Naive thymus-derived CD4-positive, alpha-beta T cell (primary cell): ENCODE measurements at regions of chr1 and their contacts with region 1.

Region 1: DNA sequence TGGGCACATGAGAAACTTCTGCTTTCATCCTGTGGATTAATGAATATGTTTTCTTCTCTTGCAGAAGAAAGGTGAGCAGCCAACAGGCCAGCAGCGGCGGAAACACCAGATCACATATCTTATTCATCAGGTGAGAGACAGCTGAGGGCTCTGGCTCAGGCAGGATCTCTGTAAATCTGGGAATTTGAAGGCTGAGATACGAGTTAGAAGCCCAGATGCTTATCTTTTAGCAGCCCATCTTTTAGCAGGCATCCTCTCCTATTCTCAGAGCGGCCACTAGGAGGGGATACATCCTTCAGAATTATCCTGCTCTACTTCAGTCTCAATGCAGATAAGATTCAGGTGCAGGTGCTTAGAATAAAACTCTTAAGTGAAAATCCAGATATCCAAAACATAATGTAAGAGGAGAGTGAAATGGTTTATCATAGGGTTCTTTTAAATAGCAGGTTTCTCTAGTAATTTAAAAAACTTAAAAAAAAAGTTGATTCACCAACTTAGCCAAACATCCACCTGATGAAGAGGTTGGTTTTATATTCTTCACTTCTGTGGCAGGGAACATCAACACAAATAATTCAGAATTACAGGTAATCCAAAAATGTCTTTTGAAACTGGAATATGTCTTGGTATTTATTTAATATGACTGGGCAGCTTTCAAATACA is 19.3 kb downstream of the SH2D2A start:
- DNase-seq: peak in 8 of 9 donors; percentile 47 to 76 (median 66)
- ATAC-seq: peak; percentile 89
- H3K4me3 ChIP-seq: no peak overlapping the region
- H3K4me3 Mint-ChIP-seq: no peak overlapping the region
- H3K27ac ChIP-seq: no peak overlapping the region
- H3K27ac Mint-ChIP-seq: peak overlapping the region in 5 of 9 donors; percentile 0 to 49 (median 18)
- H3K4me1 ChIP-seq: no peaks in the 10 kb centered on the region
- H3K4me1 Mint-ChIP-seq: peaks cover 0 to 24% (median 8%) of the 10 kb centered on the region in 7 donors
- H3K27me3 ChIP-seq: no peaks in the 10 kb centered on the region
- H3K27me3 Mint-ChIP-seq: no peaks in the 10 kb centered on the region

Region 2: DNA sequence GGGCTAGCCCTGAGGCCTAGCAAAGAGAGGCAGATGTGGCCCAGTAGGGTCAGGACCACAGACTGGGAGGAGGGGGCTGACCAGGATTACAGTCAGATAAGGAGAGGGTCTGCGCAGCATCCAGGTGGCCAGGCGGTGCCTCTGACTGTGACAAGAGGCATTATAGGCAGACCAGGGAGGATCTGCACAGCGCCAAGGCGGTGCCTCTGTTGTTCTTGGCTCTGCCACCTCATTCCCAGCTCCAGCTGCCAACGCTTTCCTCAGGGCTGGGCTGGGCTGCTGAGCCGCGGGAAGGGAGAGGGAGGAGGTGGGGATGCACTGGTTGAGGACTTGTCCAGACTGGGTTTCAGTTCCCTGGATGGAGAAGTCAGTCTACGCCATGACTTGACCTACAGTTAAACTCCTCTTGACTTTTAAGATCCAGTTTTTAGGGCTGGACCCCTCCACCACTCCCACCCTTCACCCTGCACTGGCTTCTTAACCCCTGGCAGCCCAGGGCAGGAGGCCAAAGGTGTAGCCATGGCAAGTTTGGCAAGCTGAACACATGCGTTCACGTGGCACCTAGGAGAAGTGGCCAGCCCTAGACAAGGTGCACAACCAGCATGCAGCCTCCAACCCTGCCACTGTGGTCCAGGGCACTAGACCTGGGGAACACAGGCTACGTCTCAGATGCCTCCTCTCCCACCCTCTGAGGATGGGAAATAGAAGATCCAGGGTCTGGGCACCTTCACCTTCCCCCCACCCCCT is 87.4 kb before region 1 on chr1:
- CTCF ChIA-PET with region 1: no interaction called
- POLR2A ChIA-PET with region 1: no interaction called
- intact Hi-C with region 1: no loop called
- DNase-seq: no peak
- ATAC-seq: no peak
- H3K4me3 ChIP-seq: no peak overlapping the region
- H3K4me3 Mint-ChIP-seq: no peak overlapping the region
- H3K27ac ChIP-seq: no peak overlapping the region
- H3K27ac Mint-ChIP-seq: peak overlapping the region in 2 of 9 donors; percentile 1 to 65
- H3K4me1 ChIP-seq: peaks cover 16 to 23% of the 10 kb centered on the region in 2 donors
- H3K4me1 Mint-ChIP-seq: peaks cover 11 to 29% (median 21%) of the 10 kb centered on the region in 7 donors
- H3K27me3 ChIP-seq: no peaks in the 10 kb centered on the region
- H3K27me3 Mint-ChIP-seq: peaks cover 0 to 22% (median 0%) of the 10 kb centered on the region in 5 donors

Region 3: GRCh38 chr1:156838981-156839410 is 41.7 kb after region 1 on chr1:
- CTCF ChIA-PET with region 1: interaction called, 10 read pairs
- POLR2A ChIA-PET with region 1: no interaction called
- intact Hi-C with region 1: loop called in 1 of 2 experiments (anchors 1 kb)
- DNase-seq: peak in 8 of 9 donors; percentile 30 to 74 (median 50)
- ATAC-seq: peak; percentile 75
- H3K4me3 ChIP-seq: no peak overlapping the region
- H3K4me3 Mint-ChIP-seq: peak overlapping the region in 1 of 10 donors; percentile 34
- H3K27ac ChIP-seq: no peak overlapping the region
- H3K27ac Mint-ChIP-seq: peak overlapping the region in 3 of 9 donors; percentile 47 to 81 (median 48)
- H3K4me1 ChIP-seq: peaks cover 0 to 8% of the 10 kb centered on the region in 2 donors
- H3K4me1 Mint-ChIP-seq: peaks cover 1 to 52% (median 2%) of the 10 kb centered on the region in 7 donors
- H3K27me3 ChIP-seq: no peaks in the 10 kb centered on the region
- H3K27me3 Mint-ChIP-seq: peaks cover 24 to 43% (median 33%) of the 10 kb centered on the region in 5 donors

Region 4: GRCh38 chr1:156860113-156860627 is 62.8 kb after region 1 on chr1:
- CTCF ChIA-PET with region 1: interaction called, 61 read pairs
- POLR2A ChIA-PET with region 1: no interaction called
- intact Hi-C with region 1: loop called (anchors 1 kb)
- DNase-seq: peak; percentile 21 to 77 (median 45)
- ATAC-seq: peak; percentile 71
- H3K4me3 ChIP-seq: peak overlapping the region; percentile 68
- H3K4me3 Mint-ChIP-seq: peak overlapping the region; percentile 70 to 92 (median 83)
- H3K27ac ChIP-seq: no peak overlapping the region
- H3K27ac Mint-ChIP-seq: peak overlapping the region in 5 of 9 donors; percentile 13 to 73 (median 59)
- H3K4me1 ChIP-seq: peaks cover 5 to 20% of the 10 kb centered on the region in 2 donors
- H3K4me1 Mint-ChIP-seq: peaks cover 17 to 64% (median 24%) of the 10 kb centered on the region in 7 donors
- H3K27me3 ChIP-seq: peaks cover 12 to 31% of the 10 kb centered on the region in 2 donors
- H3K27me3 Mint-ChIP-seq: peaks cover 43 to 53% (median 51%) of the 10 kb centered on the region in 5 donors

Region 5: GRCh38 chr1:156927215-156928042 is 130.1 kb after region 1 on chr1:
- CTCF ChIA-PET with region 1: interaction called, 5 read pairs
- POLR2A ChIA-PET with region 1: no interaction called
- intact Hi-C with region 1: loop called in 1 of 2 experiments (anchors 1 kb)
- DNase-seq: peak; percentile 42 to 72 (median 59)
- ATAC-seq: peak; percentile 76
- H3K4me3 ChIP-seq: no peak overlapping the region
- H3K4me3 Mint-ChIP-seq: peak overlapping the region; percentile 13 to 83 (median 65)
- H3K27ac ChIP-seq: no peak overlapping the region
- H3K27ac Mint-ChIP-seq: peak overlapping the region in 2 of 9 donors; percentile 29 to 59
- H3K4me1 ChIP-seq: peaks cover 0 to 8% of the 10 kb centered on the region in 2 donors
- H3K4me1 Mint-ChIP-seq: peaks cover 18 to 35% (median 31%) of the 10 kb centered on the region in 7 donors
- H3K27me3 ChIP-seq: peaks cover 16 to 27% of the 10 kb centered on the region in 2 donors
- H3K27me3 Mint-ChIP-seq: peaks cover 72 to 91% (median 81%) of the 10 kb centered on the region in 5 donors

Region 6: DNA sequence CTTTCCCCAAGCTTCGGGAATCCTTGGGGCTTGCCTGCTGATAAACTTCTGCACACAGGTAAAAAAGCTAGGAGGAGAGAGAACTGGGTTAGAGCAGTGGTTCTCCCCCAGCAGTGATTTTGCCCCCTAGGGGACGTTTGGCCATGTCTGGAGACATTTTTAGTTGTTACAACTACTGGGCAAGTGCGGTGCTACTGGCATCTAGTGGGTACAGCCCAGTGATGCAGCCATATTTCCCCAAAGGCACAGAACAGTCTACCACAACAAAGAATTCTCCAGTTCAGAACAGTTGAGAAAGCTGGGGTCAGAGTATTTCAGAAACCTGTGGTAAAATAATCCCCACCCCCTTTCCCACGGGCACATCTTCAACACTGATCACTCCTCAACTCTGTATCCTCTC is 164.4 kb after region 1 on chr1:
- CTCF ChIA-PET with region 1: interaction called, 3 read pairs
- POLR2A ChIA-PET with region 1: no interaction called
- intact Hi-C with region 1: loop called in 1 of 2 experiments (anchors 2 kb)
- DNase-seq: peak in 7 of 9 donors; percentile 34 to 63 (median 49)
- ATAC-seq: peak; percentile 76
- H3K4me3 ChIP-seq: peak overlapping the region; percentile 5
- H3K4me3 Mint-ChIP-seq: peak overlapping the region; percentile 63 to 94 (median 76)
- H3K27ac ChIP-seq: no peak overlapping the region
- H3K27ac Mint-ChIP-seq: peak overlapping the region in 8 of 9 donors; percentile 5 to 77 (median 58)
- H3K4me1 ChIP-seq: peaks cover 13 to 29% of the 10 kb centered on the region in 2 donors
- H3K4me1 Mint-ChIP-seq: peaks cover 34 to 77% (median 59%) of the 10 kb centered on the region in 7 donors
- H3K27me3 ChIP-seq: no peaks in the 10 kb centered on the region
- H3K27me3 Mint-ChIP-seq: peaks cover 0 to 16% (median 0%) of the 10 kb centered on the region in 5 donors